Activated naive CD4-positive, alpha-beta T cell treated with anti-CD3 and anti-CD28 coated beads for 36 hours (primary cell): ENCODE measurements at regions of chr19 and their contacts with region 1.

Region 1: GRCh38 chr19:43700395-43701000 is 15.4 kb upstream of the IRGC start:
- DNase-seq: peak; percentile 42
- H3K4me3 Mint-ChIP-seq: peak overlapping the region; percentile 61
- H3K27ac Mint-ChIP-seq: peak overlapping the region; percentile 91
- H3K4me1 Mint-ChIP-seq: peaks cover 26% of the 10 kb centered on the region
- H3K27me3 Mint-ChIP-seq: peaks cover 10% of the 10 kb centered on the region

Region 2: DNA sequence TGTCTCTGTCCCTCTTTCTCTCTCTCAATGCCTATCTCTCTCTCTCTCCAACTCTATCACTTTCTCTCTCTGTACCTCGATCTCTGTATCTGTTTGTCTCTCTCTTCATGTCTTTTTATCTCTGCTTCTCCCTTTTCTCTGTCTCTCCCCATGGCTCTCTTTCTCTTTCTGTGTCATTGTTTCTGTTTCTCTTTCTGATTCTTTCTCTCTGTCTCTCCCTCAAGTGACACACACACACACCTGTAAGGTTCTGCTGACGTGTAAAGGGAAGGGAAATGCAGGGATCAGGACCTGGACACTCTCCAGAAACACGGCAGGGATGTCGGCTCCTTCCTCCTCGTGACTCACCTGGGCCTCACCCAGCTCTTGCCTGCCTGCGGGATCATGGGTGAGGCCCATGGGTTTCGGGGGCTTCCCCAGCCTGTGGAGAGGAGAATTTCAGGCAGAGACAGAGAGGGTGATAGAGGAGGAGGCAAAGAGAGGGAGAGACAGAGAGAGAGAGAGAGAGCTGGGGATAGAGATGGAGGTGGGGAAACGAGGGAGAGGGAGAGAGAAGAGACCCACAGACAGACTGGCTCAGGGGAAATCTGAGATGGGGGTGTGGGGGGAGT is 25.1 kb before region 1 on chr19:
- CTCF ChIA-PET with region 1: no interaction called
- intact Hi-C with region 1: loop called (anchors 1 kb)
- DNase-seq: peak; percentile 33
- H3K4me3 Mint-ChIP-seq: peak overlapping the region; percentile 27
- H3K27ac Mint-ChIP-seq: peak overlapping the region; percentile 59
- H3K4me1 Mint-ChIP-seq: peaks cover 16% of the 10 kb centered on the region
- H3K27me3 Mint-ChIP-seq: no peaks in the 10 kb centered on the region